WTC11 (cell line): ENCODE measurements at regions of chr19 and their contacts with region 1.

Region 1: GRCh38 chr19:49097455-49098288 is 12.4 kb downstream of the SNRNP70 start:
- DNase-seq: peak; percentile 82
- ATAC-seq: peak; percentile 89
- H3K4me3 Mint-ChIP-seq: no peak overlapping the region
- H3K27ac Mint-ChIP-seq: peak overlapping the region; percentile 85
- H3K4me1 Mint-ChIP-seq: peaks cover 13% of the 10 kb centered on the region
- H3K27me3 Mint-ChIP-seq: no peaks in the 10 kb centered on the region
- CTCF ChIP-seq: peak; percentile 98

Region 2: DNA sequence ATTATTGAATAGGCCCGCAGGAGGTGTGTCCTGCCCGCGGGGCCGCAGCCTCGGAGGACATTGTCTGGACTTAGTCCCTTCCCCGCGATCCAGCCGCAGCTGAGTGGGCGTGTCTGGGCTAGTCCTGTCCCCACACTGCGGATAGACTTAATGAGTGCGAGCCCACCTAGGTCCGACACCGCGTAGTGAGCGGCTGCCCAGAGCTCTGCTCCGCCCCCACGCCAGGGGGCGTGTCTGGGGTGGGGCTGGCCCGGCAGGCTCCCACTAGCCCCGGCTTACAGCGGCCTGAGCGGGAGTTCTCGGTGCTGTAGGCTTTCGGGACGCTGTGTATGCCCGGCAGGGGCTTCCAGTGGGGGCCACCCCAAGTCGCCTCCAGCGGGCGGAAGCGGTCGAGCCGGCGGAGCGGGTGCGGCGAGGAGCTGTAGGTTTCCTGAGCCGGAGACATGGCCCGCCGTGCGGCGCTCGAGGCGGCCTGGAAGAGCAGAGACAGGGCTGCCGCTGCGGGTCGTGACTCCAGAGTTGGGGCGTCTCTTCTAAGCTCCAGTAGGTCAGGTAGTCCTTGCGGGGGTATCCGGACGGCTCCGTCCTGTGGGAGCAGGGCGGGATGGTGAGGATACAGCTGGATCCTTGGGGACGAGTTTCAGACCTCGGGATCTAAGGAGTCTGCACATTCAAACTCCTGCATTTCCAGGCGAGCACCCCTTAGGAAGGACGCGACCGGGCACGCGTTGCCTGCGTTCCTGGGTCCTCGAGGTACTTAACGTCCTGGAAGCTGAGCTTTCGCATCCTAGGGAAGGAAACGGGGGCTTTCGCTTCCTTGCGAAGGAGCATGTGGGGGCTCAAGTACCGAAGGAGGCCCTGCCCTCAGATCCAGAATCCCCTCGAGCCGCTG is 41.4 kb before region 1 on chr19:
- CTCF ChIA-PET with region 1: interaction called, 20 read pairs
- POLR2A ChIA-PET with region 1: interaction called, 4 read pairs
- DNase-seq: peak; percentile 76
- ATAC-seq: peak; percentile 82
- H3K4me3 Mint-ChIP-seq: peak overlapping the region; percentile 71
- H3K27ac Mint-ChIP-seq: no peak overlapping the region
- H3K4me1 Mint-ChIP-seq: peaks cover 14% of the 10 kb centered on the region
- H3K27me3 Mint-ChIP-seq: peaks cover 75% of the 10 kb centered on the region
- CTCF ChIP-seq: peak; percentile 19; the same call in 1 of the 2 replicates

Region 3: DNA sequence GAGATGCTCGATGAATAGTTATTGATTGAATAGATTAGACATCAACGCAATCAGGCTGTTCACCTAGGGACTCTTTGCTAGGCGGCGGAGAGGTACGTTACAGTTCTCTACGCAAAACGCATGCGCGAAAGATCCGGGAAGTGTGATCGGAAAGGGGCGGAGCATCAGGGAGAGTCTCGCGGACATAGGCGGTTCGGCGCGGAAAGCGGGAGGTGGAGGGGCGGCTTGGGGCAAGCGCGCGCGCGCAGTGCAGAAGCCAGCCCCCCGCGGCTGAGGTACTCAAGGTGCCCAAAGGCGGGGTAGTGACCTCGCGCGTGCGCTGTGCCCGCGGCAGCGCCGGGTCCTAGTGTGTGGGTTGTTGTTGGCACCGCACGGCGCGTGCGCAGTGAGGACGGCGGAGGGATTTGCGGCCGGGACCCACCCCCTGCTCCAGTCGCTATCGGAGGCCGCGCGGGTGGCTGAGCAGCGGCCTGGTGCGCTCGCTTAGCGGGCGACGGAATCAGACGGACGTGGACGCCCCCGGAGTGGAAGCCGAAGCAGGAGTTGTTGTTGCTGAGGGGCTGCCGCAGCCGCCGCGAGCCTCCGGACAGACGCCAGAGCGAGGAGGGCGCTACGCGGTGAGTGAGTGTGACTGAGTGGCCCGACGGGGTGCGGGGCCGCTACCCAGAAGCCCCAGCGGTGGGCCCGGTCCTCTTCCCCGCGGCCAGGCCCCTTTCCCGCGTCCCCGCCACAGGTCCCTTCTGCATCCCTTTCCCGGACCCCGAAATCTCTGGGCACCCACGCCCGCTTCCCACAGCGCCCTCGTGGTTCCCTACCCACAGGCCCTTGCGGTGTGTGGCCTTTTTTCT is 12.4 kb before region 1 on chr19 and contains the start of gene SNRNP70:
- CTCF ChIA-PET with region 1: interaction called, 11 read pairs
- POLR2A ChIA-PET with region 1: interaction called, 4 read pairs
- DNase-seq: peak; percentile 99
- ATAC-seq: peak; percentile 97
- H3K4me3 Mint-ChIP-seq: peak within 1 kb of the TSS; percentile 96
- H3K27ac Mint-ChIP-seq: peak within 1 kb of the TSS; percentile 99
- H3K4me1 Mint-ChIP-seq: peaks cover 17% of the 10 kb centered on the region
- H3K27me3 Mint-ChIP-seq: peaks cover 16% of the 10 kb centered on the region
- CTCF ChIP-seq: no peak
- total RNA-seq, gene SNRNP70: 253 to 267 TPM (median 266 TPM) in 3 replicates

Region 4: GRCh38 chr19:49133621-49134454 is 36.2 kb after region 1 on chr19:
- CTCF ChIA-PET with region 1: interaction called, 25 read pairs
- POLR2A ChIA-PET with region 1: no interaction called
- DNase-seq: peak; percentile 90
- ATAC-seq: peak; percentile 80
- H3K4me3 Mint-ChIP-seq: peak overlapping the region; percentile 70
- H3K27ac Mint-ChIP-seq: peak overlapping the region; percentile 79; the same call in 1 of the 2 replicates
- H3K4me1 Mint-ChIP-seq: peaks cover 33% of the 10 kb centered on the region
- H3K27me3 Mint-ChIP-seq: peaks cover 51% of the 10 kb centered on the region
- CTCF ChIP-seq: no peak

Region 5: GRCh38 chr19:49200238-49200862 is 102.7 kb after region 1 on chr19:
- CTCF ChIA-PET with region 1: interaction called, 72 read pairs
- POLR2A ChIA-PET with region 1: no interaction called
- DNase-seq: peak; percentile 45
- ATAC-seq: peak; percentile 73
- H3K4me3 Mint-ChIP-seq: no peak overlapping the region
- H3K27ac Mint-ChIP-seq: no peak overlapping the region
- H3K4me1 Mint-ChIP-seq: no peaks in the 10 kb centered on the region
- H3K27me3 Mint-ChIP-seq: no peaks in the 10 kb centered on the region
- CTCF ChIP-seq: no peak

Region 6: DNA sequence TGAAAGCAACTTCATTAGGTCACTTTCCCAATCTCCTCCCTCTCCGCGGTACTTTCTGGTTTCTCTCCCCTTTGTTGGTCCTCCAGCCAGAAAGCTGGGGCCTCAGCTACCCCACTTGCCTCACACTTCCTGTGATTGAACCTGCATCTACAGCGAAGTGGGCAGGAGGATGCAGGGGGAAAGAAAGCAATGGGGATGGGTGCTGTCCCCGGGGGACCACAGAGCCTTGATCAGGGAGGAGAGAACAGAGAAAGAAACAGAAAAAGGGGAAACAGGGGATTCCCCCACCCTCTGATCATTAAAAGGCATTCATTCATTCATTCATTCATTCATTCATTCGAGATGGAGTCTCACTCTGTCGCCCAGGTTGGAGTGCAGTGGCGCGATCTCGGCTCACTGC is 134.1 kb after region 1 on chr19:
- CTCF ChIA-PET with region 1: no interaction called
- POLR2A ChIA-PET with region 1: no interaction called
- DNase-seq: no peak
- ATAC-seq: no peak
- H3K4me3 Mint-ChIP-seq: no peak overlapping the region
- H3K27ac Mint-ChIP-seq: no peak overlapping the region
- H3K4me1 Mint-ChIP-seq: no peaks in the 10 kb centered on the region
- H3K27me3 Mint-ChIP-seq: peaks cover 3% of the 10 kb centered on the region; the same call in 1 of the 2 replicates
- CTCF ChIP-seq: no peak

Region 7: DNA sequence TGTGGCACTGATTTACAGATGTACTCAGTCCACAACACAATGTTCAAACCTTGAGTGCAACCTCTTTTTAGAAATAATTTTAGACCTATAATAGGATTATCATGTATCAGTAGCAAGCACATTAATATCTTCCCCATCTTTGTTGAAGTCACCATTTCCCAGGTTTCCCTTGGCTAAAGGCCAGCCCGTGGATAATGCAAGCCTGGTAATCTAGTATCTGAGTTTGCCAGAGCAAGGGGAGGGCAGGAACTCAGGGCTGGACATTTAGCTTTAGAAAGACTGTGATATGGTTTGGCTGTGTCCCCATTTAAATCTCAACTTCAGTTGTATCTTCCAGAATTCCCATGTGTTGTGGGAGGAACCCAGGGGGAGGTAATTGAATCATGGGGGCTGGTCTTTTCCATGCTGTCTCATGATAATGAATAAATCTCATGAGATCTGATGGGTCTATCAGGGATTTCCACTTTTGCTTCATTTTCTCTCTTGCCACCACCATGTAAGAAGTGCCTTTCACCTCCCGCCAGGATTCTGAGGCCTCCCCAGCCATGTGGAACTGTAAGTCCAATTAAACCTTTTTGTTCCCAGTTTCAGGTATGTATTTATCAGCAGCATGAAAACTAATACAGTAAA is 189.6 kb after region 1 on chr19:
- CTCF ChIA-PET with region 1: no interaction called
- POLR2A ChIA-PET with region 1: no interaction called
- DNase-seq: no peak
- ATAC-seq: no peak
- H3K4me3 Mint-ChIP-seq: no peak overlapping the region
- H3K27ac Mint-ChIP-seq: no peak overlapping the region
- H3K4me1 Mint-ChIP-seq: no peaks in the 10 kb centered on the region
- H3K27me3 Mint-ChIP-seq: peaks cover 19% of the 10 kb centered on the region
- CTCF ChIP-seq: no peak

Region 8: GRCh38 chr19:50147462-50148423 is 1050.1 kb after region 1 on chr19:
- CTCF ChIA-PET with region 1: no interaction called
- POLR2A ChIA-PET with region 1: no interaction called
- DNase-seq: peak; percentile 86
- ATAC-seq: peak; percentile 95
- H3K4me3 Mint-ChIP-seq: peak overlapping the region; percentile 72
- H3K27ac Mint-ChIP-seq: no peak overlapping the region
- H3K4me1 Mint-ChIP-seq: no peaks in the 10 kb centered on the region
- H3K27me3 Mint-ChIP-seq: peaks cover 28% of the 10 kb centered on the region
- CTCF ChIP-seq: no peak